ENCODE measurements at regions of chr11 and their contacts with region 1.

Region 1: GRCh38 chr11:76768088-76768908 is 14.9 kb upstream of the TSKU start:
- DNase-seq: no peak
- ATAC-seq: no peak
- H3K4me3 ChIP-seq: peak overlapping the region; percentile 58
- H3K27ac ChIP-seq: peak overlapping the region; percentile 97 to 100
- H3K4me1 ChIP-seq: peaks cover 95% of the 10 kb centered on the region
- CTCF ChIP-seq: no peak
- EP300 ChIP-seq: no peak
- POLR2A ChIP-seq: peak; percentile 36
- RAD21 ChIP-seq: no peak

Region 2: DNA sequence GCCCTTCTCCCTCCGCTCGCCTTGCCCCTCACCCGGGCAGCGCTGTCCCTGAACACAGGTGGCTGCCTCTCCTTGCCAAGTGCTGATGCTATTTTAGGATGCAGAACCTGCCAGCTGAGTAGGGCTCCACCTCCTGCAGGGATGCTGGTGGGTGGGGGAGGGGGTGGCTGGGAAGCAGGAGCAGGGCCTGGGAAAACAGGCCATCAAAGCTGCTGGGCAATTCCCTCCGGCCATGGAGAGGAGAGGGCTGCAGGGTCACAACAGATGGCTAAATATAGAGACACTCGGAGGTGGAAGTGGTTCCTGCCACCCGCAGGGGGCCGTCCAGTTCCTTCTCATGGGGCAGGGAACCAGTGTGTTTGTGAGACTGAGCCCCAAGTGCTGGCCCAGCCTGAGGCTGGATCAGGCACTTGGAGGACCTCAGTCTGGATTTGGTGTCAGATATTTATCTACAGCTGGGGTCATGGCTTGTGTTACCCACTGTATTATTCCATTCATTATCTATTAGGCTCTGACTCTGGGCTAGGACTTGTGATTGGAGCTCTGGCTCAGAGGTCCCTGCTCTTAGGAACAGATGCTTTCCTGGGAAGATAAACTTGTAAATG is 157.3 kb before region 1 on chr11:
- CTCF ChIA-PET with region 1: no interaction called
- POLR2A ChIA-PET with region 1: no interaction called
- DNase-seq: no peak
- ATAC-seq: no peak
- H3K4me3 ChIP-seq: no peak overlapping the region
- H3K27ac ChIP-seq: no peak overlapping the region
- H3K4me1 ChIP-seq: no peaks in the 10 kb centered on the region
- CTCF ChIP-seq: no peak
- EP300 ChIP-seq: no peak
- POLR2A ChIP-seq: no peak
- RAD21 ChIP-seq: no peak

Region 3: DNA sequence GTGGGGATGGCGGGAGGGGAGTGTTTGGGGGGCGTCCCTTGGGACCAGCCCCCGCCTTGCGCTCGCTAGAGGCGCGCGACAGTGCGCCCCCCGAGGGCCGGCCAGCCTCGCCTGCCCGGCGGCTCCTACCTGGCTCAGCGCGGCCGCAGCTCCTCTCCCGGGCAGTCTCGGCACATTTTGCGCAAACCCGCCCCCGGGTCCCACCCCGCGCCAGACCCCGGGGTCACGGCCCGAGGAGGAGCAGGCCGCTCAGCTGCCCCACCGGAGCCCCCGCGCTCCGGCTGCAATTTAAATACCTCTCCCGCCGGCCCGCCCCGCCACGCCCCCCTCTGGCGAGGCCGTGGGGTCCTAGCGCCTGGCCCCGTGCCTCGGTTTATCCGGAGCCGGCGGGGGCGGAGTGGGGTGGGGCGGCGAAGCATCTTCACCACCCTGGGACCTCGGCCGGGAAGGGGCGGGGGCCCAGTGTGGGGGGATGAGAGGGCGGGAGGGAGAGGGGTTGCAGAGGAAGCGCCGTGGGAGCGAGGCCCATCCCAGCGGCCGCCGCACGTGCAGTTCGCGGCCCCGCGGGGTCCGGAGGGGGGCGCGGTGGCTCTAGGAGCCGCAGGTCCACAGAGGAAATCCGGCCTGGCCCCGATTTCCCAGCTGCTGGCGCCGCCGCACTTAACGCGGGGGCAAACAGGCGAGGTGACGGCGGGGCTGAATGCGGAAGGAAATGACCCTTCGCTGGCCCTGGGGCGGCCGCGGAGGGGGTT is 97.6 kb before region 1 on chr11 and contains the start of gene LRRC32:
- CTCF ChIA-PET with region 1: no interaction called
- POLR2A ChIA-PET with region 1: no interaction called
- DNase-seq: no peak
- ATAC-seq: peak in 1 of 2 experiments; percentile 52; a peak in 3 of 6 replicates
- H3K4me3 ChIP-seq: peak within 1 kb of the TSS; percentile 59
- H3K27ac ChIP-seq: peak within 1 kb of the TSS in 1 of 2 experiments; percentile 57; a peak in 3 of 6 replicates
- H3K4me1 ChIP-seq: peaks cover 8% of the 10 kb centered on the region; the same call in 1 of the 3 replicates
- CTCF ChIP-seq: no peak; the same call in 1 of the 3 replicates
- EP300 ChIP-seq: no peak
- POLR2A ChIP-seq: no peak
- RAD21 ChIP-seq: no peak
- polyA plus RNA-seq, gene LRRC32: 0.62 and 1.0 TPM in 2 replicates

Region 4: DNA sequence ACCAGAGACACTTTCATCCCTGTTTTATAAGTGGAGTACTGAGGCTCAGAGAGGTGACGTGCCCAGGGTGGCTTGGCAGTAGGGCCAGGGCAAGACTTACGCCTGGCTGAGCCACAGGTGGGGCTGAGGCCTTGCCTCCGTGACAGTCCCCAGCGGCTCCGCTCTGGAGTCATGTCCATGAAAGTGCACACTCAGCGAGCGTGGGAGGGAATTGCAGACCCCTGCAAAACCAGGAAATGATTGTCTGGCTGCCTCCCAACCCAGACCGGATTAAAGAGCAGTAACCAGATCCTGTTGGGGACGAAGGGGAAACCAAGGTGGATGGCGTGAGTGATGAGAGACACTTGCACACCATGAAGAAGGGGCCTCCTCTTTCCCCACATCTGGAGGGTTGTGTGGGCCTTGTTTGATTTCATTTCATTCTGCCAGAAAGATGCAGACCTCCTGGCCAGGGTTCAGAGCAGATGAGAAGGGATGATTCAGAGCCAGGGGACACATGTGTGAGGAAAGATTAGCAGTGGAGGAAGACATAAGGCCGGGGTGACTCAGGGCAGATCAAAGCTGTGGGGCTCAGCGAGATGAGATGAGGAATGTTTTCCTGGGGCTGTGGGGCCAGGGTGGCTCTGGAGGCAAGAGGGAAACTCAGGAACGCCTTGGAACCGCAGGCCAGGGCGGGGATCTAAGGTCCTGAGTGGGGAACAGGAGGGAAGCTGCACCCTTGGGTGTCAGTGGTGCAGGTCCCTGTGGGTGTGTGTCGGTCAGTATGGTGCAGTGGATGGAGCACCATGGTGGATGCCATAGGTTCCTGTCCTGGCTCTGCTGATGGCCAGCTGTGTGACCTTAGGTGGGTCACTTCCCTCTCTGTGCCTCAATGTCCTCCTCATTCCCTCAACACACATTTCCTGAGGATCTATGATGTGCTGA is 67.9 kb before region 1 on chr11:
- CTCF ChIA-PET with region 1: no interaction called
- POLR2A ChIA-PET with region 1: no interaction called
- DNase-seq: peak; percentile 64 to 74
- ATAC-seq: peak; percentile 85 to 86
- H3K4me3 ChIP-seq: no peak overlapping the region
- H3K27ac ChIP-seq: peak overlapping the region; percentile 76 to 89
- H3K4me1 ChIP-seq: peaks cover 36% of the 10 kb centered on the region
- CTCF ChIP-seq: no peak
- EP300 ChIP-seq: peak; percentile 60 to 67; a peak in 3 of 5 replicates
- POLR2A ChIP-seq: no peak
- RAD21 ChIP-seq: no peak

Region 5: DNA sequence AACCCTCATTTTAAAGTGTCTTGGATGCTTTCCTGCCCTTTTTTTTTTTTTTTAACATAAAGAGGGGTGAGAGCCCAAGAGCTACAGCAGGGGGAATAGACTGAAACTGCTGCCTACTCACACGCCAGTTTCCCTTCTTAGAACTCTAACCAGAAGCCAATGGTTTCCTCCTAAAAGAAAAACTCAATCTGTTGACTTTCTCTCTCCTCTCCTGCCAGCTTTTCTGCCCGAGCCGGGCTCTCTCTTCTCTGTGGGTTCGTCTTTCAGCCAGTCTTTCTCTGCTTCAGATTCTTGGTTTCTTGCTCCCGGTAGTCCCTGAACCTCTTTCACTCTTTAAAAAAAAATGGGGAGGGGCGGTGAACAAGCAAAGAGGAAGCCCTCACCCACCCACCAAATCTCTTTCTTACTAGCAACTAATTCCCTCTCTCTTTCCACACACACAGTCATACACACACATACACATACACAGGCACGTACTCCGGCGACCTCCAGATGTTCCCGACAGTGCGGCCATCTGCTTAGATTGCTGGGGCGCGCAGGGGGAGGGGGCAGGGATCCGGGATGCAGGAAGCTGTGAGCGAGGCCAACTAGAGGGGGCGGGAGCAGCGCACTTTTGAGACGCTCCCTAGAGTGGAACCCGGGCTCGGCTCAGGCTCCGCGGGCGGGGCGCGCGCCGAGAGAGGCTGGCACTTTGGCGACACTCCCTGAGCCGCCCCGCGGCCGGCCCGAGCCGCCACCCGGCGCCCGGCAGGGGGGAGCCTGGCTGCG is 14.4 kb after region 1 on chr11:
- CTCF ChIA-PET with region 1: interaction called, 10 read pairs
- POLR2A ChIA-PET with region 1: interaction called, 134 read pairs
- DNase-seq: peak; percentile 87 to 95
- ATAC-seq: peak; percentile 66 to 71
- H3K4me3 ChIP-seq: peak overlapping the region; percentile 71
- H3K27ac ChIP-seq: peak overlapping the region; percentile 96 to 98
- H3K4me1 ChIP-seq: peaks cover 36% of the 10 kb centered on the region
- CTCF ChIP-seq: no peak
- EP300 ChIP-seq: peak; percentile 15 to 46; a peak in 3 of 5 replicates
- POLR2A ChIP-seq: peak; percentile 57
- RAD21 ChIP-seq: peak; percentile 2 to 34; a peak in 1 of 5 replicates

Region 6: DNA sequence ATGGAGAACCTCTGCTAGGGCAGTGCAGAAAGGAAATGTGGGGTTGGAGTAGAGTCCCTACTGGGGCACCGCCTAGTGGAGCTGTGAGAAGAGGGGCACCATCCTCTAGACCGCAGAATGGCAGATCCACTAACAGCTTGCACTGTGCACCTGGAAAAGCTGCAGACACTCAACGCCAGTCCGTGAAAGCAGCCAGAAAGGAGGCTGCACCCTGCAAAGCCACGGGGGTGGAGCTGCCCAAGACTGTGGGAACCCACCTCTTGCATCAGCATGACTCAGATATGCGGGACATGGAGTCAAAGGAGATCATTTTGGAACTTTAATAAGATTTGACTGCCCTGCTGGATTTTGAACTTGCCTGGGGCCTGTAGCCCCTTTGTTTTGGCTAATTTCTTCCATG is 23.6 kb after region 1 on chr11:
- CTCF ChIA-PET with region 1: interaction called, 6 read pairs
- POLR2A ChIA-PET with region 1: interaction called, 99 read pairs
- DNase-seq: peak in 1 of 2 experiments; percentile 79
- ATAC-seq: peak in 1 of 2 experiments; percentile 35; a peak in 3 of 6 replicates
- H3K4me3 ChIP-seq: peak overlapping the region; percentile 71; the same call in 1 of the 3 replicates
- H3K27ac ChIP-seq: peak overlapping the region; percentile 96 to 98
- H3K4me1 ChIP-seq: peaks cover 100% of the 10 kb centered on the region
- CTCF ChIP-seq: no peak
- EP300 ChIP-seq: no peak
- POLR2A ChIP-seq: no peak
- RAD21 ChIP-seq: no peak